ENCODE measurements at regions of chr9 and their contacts with region 1.

Region 1: GRCh38 chr9:94783102-94783664 is 56.7 kb downstream of the AOPEP start:
- DNase-seq: peak in 9 of 10 donors; percentile 27 to 90 (median 69)

Region 2: DNA sequence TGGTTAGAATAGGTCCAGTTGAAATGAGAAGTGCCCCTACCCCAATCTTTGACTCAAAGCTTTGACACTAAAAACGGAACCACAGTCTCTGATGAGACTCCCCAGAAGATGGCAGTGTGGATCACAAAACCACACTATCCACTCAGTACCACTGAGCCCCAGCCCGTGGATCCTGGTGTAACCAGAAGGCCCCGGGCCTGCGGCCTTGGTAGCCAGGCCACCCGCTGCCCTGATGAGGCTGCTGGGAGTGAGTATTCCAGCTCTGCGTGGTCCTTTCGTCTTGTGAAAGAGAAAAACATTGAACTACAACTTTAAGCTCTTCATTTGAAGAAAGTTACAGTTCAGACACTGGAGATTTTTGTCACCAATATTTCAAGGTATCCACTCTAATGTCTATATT is 101.7 kb before region 1 on chr9:
- intact Hi-C with region 1: loop called (anchors 10 kb)
- DNase-seq: peak; percentile 36 to 96 (median 80)

Region 3: DNA sequence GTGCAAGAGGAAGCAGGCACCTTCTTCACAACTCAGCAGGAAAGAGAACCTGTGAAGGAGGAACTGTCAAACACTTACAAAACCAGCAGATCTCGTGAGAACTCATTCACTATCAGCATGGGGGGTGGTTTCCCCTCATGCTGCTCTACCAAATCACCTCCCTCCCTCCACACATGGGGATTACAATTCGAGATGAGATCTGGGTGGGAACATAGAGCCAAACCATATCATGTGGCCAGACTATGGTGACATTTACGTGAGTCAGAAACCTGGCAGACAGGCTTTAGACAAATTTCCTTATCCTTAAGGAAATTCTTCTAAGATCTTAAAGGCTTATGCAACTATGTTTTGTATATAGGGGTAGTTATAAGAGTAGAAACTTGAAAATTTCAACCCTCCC is 65.4 kb before region 1 on chr9:
- intact Hi-C with region 1: no loop called
- DNase-seq: no peak

Region 4: GRCh38 chr9:94900222-94901018 is 117.2 kb after region 1 on chr9:
- intact Hi-C with region 1: loop called (anchors 10 kb)
- DNase-seq: no peak

Region 5: DNA sequence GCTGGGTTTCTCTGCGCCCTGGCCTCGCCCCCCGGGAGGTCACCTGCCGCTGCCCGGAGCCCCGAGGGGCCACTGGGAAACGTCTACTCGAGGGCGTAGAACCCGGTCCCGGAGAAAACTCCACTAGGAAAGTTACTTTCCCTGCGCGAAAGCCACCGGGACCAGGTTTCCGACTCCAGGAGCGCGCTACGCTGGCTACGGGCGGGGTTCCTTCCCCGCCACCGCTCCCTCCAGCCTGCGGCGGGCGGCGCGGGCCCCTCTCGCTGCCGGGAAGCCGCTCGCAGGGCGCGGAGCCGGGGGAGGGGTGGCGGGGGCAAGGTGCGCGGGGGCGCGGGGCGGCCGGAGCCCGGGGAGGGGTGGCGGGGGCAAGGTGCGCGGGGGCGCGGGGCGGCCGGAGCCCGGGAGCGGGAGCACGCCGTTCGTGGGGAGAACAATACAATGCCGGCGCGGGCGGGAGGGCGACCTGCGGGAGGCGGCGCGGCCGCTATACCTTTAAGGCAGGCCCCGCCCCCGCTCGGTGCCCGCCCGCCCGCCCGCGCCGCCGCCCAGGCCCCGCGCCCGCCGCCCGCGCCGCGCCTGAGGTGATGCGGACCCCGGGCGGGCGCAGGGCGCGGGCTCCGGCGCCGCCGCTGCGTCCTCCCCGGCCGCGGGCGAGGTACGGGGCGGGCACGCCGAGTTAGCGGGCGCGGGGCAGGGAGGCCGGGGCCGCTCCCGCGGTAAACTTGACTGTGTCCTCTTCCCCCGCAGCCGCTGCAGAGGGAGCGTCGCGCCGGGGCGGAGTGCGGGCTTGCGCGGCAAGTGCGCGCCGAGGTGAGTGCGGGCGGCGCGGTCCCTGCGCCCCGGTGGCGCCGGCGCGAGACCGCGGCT is 221.5 kb after region 1 on chr9:
- intact Hi-C with region 1: loop called (anchors 1 kb)
- DNase-seq: peak in 3 of 10 donors; percentile 63 to 91 (median 83)

Region 6: GRCh38 chr9:95103385-95103784 is 320.2 kb after region 1 on chr9:
- intact Hi-C with region 1: no loop called
- DNase-seq: peak in 2 of 10 donors; percentile 76 to 86

Measured in posterior cingulate gyrus (tissue), 11 donors.